ENCODE measurements at regions of chr9 and their contacts with region 1.

Region 1: GRCh38 chr9:2132484-2133082 is 117.4 kb downstream of the SMARCA2 start:
- DNase-seq: no peak
- ATAC-seq: no peak

Region 2: DNA sequence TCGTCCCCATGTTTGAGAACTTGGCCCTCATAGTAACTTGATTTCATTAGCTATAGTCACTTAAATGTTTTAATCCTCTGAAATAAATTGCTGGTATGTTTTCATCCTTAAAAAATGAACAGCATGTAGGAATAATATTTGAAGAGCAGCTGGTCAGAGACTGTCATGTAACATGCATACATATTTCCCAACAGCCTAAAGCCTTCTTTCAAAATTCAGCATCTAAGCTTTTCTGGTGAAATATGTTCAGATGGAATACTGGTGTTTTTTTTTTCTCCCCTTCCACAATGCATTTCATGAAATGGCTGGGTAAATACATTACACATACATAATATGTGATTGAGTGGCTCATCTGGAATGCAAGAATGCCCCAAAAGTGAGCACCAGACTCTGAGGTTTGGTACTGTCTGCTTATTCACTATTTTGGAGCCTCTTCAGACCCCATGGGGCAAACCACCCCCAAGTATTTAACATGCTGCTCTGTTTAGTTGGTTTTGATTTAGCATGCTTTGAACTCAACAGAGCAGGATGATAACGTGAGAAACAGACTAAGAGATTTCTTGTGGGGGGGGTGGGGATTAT is 23.4 kb before region 1 on chr9:
- intact Hi-C with region 1: no loop called
- DNase-seq: no peak
- ATAC-seq: no peak

Region 3: DNA sequence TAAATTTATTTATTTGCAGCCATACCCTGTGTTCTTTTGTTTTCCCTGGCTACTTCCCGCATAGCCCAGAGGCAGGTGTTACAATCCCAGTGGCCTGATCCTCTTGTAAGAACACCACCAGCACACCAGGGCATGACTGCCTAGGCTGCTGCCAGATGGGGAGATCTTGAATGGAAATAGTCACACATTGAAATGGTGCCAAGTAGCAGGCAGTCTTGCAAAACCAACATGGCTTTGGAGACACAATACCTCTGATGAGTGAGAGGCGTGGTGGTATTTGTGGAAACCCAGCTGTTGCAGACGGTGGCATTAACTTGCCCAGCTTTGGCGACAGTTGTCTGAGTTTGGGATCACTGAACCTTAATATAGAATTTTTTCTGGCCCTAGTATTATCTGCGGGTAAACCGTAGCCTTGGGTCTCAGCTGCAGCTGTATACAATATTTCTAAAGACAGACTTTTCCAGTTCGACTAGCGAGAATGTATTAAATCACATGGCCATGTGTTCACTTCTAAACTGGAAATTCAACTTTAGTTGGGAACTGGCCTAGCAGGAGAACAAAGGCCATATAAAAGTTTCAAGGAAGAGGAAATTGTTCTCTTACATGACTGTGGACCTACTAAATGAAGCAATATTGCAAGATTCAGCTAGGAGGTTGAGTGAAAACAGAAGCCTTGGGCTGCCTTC is 159.5 kb after region 1 on chr9:
- intact Hi-C with region 1: no loop called
- DNase-seq: no peak
- ATAC-seq: peak; percentile 39

Region 4: DNA sequence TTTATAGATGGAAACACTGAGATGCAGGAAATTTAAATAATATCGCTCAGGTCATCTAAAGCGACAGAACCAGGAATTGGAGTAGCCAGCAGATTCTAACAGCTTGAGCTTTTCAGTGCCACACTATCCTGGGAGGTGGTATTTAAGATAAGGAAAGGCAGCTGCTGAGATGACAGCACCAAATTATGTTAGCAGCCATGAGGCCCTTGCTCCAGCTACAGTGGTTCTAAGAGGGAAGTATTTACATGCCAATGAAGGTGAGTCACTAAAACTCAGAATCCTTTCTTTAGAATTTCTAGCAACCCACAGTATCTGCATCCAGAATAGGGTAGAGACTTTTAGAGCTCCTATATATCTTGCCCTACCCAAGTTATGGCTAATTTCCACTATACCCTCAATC is 362.0 kb after region 1 on chr9:
- intact Hi-C with region 1: loop called (anchors 5 kb)
- DNase-seq: no peak
- ATAC-seq: no peak

Region 5: GRCh38 chr9:2620919-2621679 is 488.5 kb after region 1 on chr9:
- intact Hi-C with region 1: loop called (anchors 5 kb)
- DNase-seq: peak; percentile 91
- ATAC-seq: peak; percentile 87

Region 6: GRCh38 chr9:2727966-2728613 is 595.5 kb after region 1 on chr9:
- intact Hi-C with region 1: loop called (anchors 5 kb)
- DNase-seq: no peak
- ATAC-seq: peak; percentile 82

Region 7: DNA sequence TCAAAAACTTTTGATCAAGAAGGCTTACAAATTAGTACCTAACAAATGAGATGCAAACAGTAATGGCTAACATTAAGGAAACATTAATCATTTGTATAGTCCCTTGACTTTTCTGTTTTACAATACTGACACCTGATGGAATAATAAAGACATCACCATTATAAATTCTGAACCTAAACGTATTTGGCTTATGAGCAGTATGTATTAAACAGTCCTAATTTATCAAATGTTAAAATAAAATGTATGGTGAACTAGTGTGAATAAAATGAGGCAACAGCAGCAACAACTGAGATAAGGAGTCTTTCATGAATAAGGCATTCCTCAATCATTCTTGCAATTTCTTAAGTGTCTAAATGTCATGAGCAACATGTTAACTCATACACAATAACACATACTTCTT is 705.3 kb after region 1 on chr9:
- intact Hi-C with region 1: loop called (anchors 2 kb)
- DNase-seq: no peak
- ATAC-seq: peak; percentile 61